ENCODE measurements at regions of chr11 and their contacts with region 1.

Region 1: DNA sequence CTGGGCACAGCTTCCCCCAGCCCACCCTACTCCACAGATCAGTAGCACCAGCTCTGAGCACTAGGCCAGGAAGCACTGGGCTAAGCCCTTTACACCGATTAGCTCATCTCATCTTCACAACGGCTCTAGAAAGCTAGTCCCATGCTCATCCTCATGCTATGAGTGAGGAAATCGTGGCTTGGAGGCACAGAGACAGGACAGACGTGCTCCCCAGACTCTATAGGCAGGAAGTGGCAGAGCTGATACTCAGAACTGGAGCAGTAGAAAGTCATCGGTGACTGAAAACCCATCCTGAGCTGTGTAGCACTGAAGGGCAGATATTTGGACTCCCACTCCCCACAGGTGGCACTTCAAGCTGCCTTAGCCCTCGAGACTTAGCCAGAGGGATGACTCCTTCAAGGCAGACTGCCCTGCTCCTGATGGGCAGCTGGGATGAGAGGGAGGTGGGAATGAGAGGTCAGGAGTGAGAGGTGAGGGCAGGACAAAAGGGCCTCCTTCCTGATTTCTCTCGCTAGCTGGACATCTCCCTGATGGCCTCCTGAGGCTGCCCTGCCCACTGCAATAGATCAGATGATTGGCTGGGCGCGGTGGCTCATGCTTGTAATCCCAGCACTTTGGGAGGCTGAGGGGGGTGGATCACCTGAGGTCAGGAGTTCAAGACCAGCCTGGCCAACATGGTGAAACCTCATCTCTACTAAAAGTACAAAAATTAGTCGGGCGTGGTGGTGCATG is 9.7 kb downstream of the CD5 start:
- DNase-seq: peak; percentile 54
- ATAC-seq: peak; percentile 97
- H3K4me3 Mint-ChIP-seq: peak overlapping the region; percentile 88
- H3K27ac Mint-ChIP-seq: peak overlapping the region; percentile 97
- H3K4me1 Mint-ChIP-seq: peaks cover 93% of the 10 kb centered on the region
- H3K27me3 Mint-ChIP-seq: no peaks in the 10 kb centered on the region

Region 2: DNA sequence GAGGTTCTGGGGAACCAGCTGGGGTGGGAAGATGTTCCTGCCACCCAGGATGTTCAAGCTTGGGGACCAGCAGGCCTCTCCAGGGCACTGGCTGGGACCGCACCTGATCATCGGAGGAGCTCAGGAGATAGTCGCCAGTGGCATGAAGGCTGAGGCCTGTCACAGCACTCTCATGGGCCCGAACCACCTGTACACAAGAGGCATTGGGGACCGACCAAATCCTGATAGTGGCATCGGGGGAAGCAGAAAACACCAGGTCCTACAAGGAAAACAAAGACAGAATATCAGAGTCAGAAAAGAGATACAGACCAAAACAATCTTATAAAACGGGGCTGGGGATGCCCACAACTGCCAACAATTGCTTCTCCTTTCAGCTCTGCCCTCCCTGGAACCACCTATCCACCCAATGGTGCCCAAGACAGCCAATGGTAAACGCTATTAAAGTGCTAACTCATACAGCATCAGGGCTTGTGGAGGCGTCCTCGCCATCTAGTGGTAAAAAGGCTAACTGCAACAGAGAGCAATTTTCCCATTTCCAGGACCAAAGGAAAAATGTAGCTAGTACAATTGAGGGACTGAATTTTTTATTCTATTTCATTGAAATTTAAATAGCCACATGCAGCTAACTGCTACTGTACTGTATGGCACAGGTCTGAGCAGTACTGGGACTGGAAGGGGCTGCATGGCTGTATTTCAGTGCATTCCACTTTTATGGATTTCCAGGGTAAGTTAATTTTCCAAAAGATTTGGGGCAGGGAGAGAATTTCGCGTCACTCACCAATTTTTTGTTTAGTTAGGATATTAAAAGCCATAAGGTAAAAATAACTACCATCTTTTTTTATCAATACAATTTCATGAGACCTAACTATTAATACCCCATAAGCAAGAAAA is 212.7 kb before region 1 on chr11:
- POLR2A ChIA-PET with region 1: no interaction called
- DNase-seq: no peak
- ATAC-seq: peak; percentile 78
- H3K4me3 Mint-ChIP-seq: no peak overlapping the region
- H3K27ac Mint-ChIP-seq: peak overlapping the region; percentile 31
- H3K4me1 Mint-ChIP-seq: peaks cover 9% of the 10 kb centered on the region
- H3K27me3 Mint-ChIP-seq: no peaks in the 10 kb centered on the region

Region 3: GRCh38 chr11:60970369-60970774 is 141.6 kb before region 1 on chr11:
- POLR2A ChIA-PET with region 1: interaction called, 13 read pairs
- DNase-seq: peak; percentile 85
- ATAC-seq: peak; percentile 43
- H3K4me3 Mint-ChIP-seq: peak overlapping the region; percentile 26
- H3K27ac Mint-ChIP-seq: peak overlapping the region; percentile 30
- H3K4me1 Mint-ChIP-seq: peaks cover 29% of the 10 kb centered on the region
- H3K27me3 Mint-ChIP-seq: peaks cover 3% of the 10 kb centered on the region

Region 4: GRCh38 chr11:60985991-60986915 is 125.7 kb before region 1 on chr11:
- POLR2A ChIA-PET with region 1: interaction called, 14 read pairs
- DNase-seq: peak; percentile 77
- ATAC-seq: peak; percentile 85
- H3K4me3 Mint-ChIP-seq: peak overlapping the region; percentile 83
- H3K27ac Mint-ChIP-seq: peak overlapping the region; percentile 97
- H3K4me1 Mint-ChIP-seq: peaks cover 82% of the 10 kb centered on the region
- H3K27me3 Mint-ChIP-seq: no peaks in the 10 kb centered on the region

Region 5: GRCh38 chr11:61028272-61028761 is 83.6 kb before region 1 on chr11:
- POLR2A ChIA-PET with region 1: interaction called, 16 read pairs
- DNase-seq: peak; percentile 46
- ATAC-seq: peak; percentile 27
- H3K4me3 Mint-ChIP-seq: peak overlapping the region; percentile 84
- H3K27ac Mint-ChIP-seq: peak overlapping the region; percentile 95
- H3K4me1 Mint-ChIP-seq: peaks cover 66% of the 10 kb centered on the region
- H3K27me3 Mint-ChIP-seq: no peaks in the 10 kb centered on the region

Region 6: DNA sequence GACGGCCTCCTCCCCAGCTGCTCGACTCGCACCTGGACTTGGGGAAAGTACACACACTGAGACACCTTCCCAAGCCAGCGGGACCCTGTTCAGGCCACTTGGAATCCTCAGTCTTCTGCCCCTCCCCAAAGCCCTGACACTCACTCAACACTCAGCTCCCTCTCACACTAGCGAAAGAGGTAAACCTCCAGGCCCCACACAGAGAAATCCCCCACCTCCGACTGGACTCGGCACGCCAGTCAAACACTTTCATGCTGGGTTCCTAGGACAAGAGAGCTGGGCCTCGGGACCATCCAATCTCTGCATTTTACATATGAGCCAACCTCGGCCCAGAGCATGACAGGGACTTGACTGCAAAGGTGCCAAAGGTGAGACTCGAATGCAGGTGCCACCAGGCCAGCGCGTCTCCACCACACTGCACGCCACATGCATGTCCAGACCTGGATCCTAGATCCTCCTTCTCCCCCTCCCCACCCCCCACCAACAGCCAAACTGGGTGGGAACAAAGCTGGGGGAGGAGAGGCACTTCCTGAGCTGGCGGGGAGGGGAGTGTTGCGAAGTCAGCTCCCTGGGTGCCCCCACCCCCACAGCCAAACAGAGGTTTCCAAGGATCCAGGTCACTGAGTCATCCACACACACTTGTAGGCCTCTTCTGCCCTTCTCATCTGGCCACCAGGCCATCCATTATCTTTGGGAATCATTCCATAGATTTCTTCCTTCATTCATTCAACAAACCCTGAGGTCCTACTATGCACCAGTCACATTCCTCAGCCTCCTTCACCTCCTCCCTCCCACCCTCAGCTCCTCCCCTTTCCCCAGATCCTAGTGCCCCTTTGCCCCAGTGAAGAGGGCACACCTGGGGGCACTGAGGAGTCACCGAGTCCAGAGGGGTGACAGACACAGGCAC is 20.3 kb before region 1 on chr11:
- POLR2A ChIA-PET with region 1: interaction called, 14 read pairs
- DNase-seq: peak; percentile 49
- ATAC-seq: peak; percentile 46
- H3K4me3 Mint-ChIP-seq: peak overlapping the region; percentile 84
- H3K27ac Mint-ChIP-seq: peak overlapping the region; percentile 94
- H3K4me1 Mint-ChIP-seq: peaks cover 62% of the 10 kb centered on the region
- H3K27me3 Mint-ChIP-seq: no peaks in the 10 kb centered on the region